SK-MEL-5 (cell line): ENCODE measurements at regions of chr12 and their contacts with region 1.

Region 1: GRCh38 chr12:52789637-52790426 is 6.1 kb downstream of the KRT3 start:
- DNase-seq: no peak

Region 2: DNA sequence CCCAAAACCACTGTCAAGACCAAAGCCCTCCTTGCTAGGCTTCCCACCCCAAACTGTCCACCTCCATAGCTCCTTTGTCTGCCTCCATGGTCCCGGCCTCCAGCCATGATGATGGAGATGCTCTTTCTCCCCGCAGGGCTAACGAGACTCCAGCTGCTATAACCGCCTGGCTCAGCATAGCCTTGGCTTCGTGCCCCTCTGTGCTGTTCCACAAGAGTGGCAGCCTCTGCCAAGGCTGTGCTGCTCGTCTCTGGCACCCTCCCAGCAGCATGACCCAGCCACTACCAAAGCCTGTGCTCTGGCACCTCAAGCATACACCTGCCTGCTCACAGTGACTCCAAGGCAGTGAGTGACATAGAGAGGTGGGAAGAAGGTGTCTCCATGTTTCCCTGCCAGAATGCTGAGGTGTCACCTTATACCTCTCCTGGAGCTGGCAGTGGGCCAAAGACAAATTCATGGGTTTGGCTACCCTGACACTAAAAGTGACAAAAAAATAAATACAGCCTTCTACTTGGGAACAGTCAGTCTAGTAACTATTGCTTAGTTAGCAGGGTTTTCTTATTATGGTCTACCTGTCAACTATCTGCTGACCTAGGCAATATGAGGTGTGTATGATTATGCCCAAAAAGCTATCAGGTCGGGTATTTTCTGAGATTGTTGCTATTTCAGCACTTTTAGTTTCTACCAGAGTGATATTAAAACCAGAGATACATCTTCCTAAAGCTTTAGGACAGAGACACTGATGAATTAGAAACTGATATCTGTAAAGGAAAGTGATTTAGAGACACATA is 155.4 kb before region 1 on chr12:
- in situ Hi-C with region 1: loop called (anchors 25 kb)
- DNase-seq: no peak